HEK293 (cell line): ENCODE measurements at regions of chr1 and their contacts with region 1.

Region 1: GRCh38 chr1:115764541-115764940 is 4.0 kb downstream of the CASQ2 start:
- H3K4me3 ChIP-seq: no peak overlapping the region
- H3K27ac ChIP-seq: no peak overlapping the region
- H3K4me1 ChIP-seq: no peaks in the 10 kb centered on the region
- CTCF ChIP-seq: 0 out of 2 replicates have a peak, but pooled peaks have one; percentile 30

Region 2: DNA sequence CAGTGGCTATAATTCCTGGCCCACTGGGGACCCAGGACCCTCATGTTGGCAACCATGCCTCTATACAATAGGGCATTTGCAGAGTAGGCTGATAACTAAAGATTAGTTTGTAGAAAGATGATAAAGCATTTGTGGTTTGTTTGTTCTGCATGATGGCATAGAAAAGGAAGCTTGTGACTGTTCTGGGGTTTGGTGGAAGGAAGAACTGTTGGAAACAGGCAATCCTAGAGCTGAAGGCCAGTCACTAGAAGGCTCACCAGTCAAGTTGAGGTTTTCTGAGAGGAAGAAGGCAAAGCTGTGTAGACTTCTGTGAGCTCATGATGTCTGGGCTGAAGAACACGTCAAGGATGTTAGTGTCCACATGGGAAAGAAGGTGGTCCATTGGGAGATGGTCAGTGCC is 263.1 kb before region 1 on chr1:
- CTCF ChIA-PET with region 1: no interaction called
- POLR2A ChIA-PET with region 1: no interaction called
- H3K4me3 ChIP-seq: no peak overlapping the region
- H3K27ac ChIP-seq: no peak overlapping the region
- H3K4me1 ChIP-seq: no peaks in the 10 kb centered on the region
- CTCF ChIP-seq: no peak

Region 3: DNA sequence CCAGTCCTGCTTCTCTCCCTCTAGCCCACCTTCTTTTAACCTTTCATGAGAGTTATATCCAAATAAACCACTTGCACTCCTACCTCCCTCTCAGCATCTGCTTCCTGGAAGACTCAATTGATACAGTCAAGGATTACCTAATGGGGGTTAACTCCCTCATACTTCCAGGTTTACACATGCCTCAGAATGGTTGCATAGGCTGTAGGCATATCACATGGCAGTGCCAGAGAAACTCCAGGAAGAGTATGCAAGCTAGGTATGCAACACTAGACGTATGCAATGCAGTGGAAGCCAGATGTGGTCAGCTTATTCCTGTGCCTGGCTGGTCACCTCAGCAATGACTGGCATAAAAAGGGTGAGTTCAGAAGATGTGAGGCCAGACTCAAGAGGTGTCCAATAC is 155.5 kb before region 1 on chr1:
- CTCF ChIA-PET with region 1: interaction called, 56 read pairs
- POLR2A ChIA-PET with region 1: no interaction called
- H3K4me3 ChIP-seq: no peak overlapping the region
- H3K27ac ChIP-seq: no peak overlapping the region
- H3K4me1 ChIP-seq: no peaks in the 10 kb centered on the region
- CTCF ChIP-seq: no peak

Region 4: GRCh38 chr1:115717541-115717940 is 47.0 kb before region 1 on chr1:
- CTCF ChIA-PET with region 1: interaction called, 59 read pairs
- POLR2A ChIA-PET with region 1: no interaction called
- H3K4me3 ChIP-seq: no peak overlapping the region
- H3K27ac ChIP-seq: no peak overlapping the region
- H3K4me1 ChIP-seq: no peaks in the 10 kb centered on the region
- CTCF ChIP-seq: no peak; the same call in 1 of the 2 replicates

Region 5: GRCh38 chr1:115753830-115754229 is 10.7 kb before region 1 on chr1:
- CTCF ChIA-PET with region 1: interaction called, 11 read pairs
- POLR2A ChIA-PET with region 1: no interaction called
- H3K4me3 ChIP-seq: no peak overlapping the region
- H3K27ac ChIP-seq: no peak overlapping the region
- H3K4me1 ChIP-seq: no peaks in the 10 kb centered on the region
- CTCF ChIP-seq: no peak